Ascending aorta (tissue), 2 donors: ENCODE measurements at regions of chr3 and their contacts with region 1.

Region 1: GRCh38 chr3:17639765-17640164 is 102.7 kb downstream of the TBC1D5 start:
- DNase-seq: peak in 1 of 2 donors; percentile 79
- H3K4me3 ChIP-seq: no peak overlapping the region
- H3K27ac ChIP-seq: peak overlapping the region; percentile 72 to 82
- H3K4me1 ChIP-seq: peaks cover 7 to 44% of the 10 kb centered on the region in 2 donors
- H3K27me3 ChIP-seq: no peaks in the 10 kb centered on the region
- CTCF ChIP-seq: no peak

Region 2: DNA sequence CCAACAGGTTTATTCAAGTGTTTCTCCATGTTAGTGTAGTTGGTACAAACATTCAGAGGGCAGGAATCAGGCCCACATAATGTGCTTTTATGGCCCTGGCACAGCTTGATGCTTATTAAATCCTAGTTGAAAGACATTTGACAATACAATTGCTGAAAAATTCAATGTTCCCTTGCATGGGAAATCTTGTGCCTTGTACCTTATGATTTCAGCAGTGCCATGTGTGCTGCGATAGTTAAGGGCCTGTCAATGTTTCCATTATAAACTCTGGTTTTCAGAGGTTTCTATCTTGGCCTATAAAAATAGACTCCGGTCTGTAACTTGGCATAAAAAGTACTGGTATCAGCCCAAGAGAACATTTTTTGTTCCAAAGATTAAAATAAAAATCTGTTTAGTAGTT is 104.5 kb before region 1 on chr3:
- intact Hi-C with region 1: loop called (anchors 5 kb)
- DNase-seq: no peak
- H3K4me3 ChIP-seq: peak overlapping the region; percentile 8 to 26
- H3K27ac ChIP-seq: peak overlapping the region; percentile 76 to 79
- H3K4me1 ChIP-seq: peaks cover 3 to 22% of the 10 kb centered on the region in 2 donors
- H3K27me3 ChIP-seq: no peaks in the 10 kb centered on the region
- CTCF ChIP-seq: no peak

Region 3: DNA sequence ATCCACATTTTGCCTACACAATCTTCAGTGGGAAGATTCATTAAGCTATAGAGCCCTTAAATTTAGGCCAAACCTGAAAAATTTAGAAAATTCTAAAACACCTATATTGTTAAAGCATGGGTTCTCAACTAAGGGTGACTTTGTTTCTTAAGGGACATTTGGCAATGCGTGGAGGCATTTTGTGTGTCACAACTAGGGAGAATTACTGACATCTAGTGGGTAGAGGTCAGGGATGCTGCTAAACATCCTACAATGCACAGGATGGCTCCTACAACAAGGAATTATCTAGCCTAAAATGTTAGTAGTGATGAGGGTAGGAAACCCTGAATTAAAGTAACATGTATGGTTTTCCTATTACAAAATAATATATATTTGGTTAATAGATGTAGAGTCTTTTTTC is 46.8 kb after region 1 on chr3:
- intact Hi-C with region 1: no loop called
- DNase-seq: no peak
- H3K4me3 ChIP-seq: no peak overlapping the region
- H3K27ac ChIP-seq: no peak overlapping the region
- H3K4me1 ChIP-seq: peaks cover 0 to 5% of the 10 kb centered on the region in 2 donors
- H3K27me3 ChIP-seq: no peaks in the 10 kb centered on the region
- CTCF ChIP-seq: peak in 2 of 3 experiments; percentile 6 to 25

Region 4: GRCh38 chr3:17742108-17742879 is 102.5 kb after region 1 on chr3 and contains the start of gene TBC1D5:
- intact Hi-C with region 1: loop called (anchors 2 kb)
- DNase-seq: peak; percentile 87 to 98
- H3K4me3 ChIP-seq: peak within 1 kb of the TSS; percentile 68 to 96
- H3K27ac ChIP-seq: peak within 1 kb of the TSS; percentile 93 to 98
- H3K4me1 ChIP-seq: peaks cover 2 to 17% of the 10 kb centered on the region in 2 donors
- H3K27me3 ChIP-seq: no peaks in the 10 kb centered on the region
- CTCF ChIP-seq: peak in 1 of 3 experiments; percentile 11
- total RNA-seq, gene TBC1D5: 43.3 TPM